ENCODE measurements at regions of chr19 and their contacts with region 1.

Region 1: DNA sequence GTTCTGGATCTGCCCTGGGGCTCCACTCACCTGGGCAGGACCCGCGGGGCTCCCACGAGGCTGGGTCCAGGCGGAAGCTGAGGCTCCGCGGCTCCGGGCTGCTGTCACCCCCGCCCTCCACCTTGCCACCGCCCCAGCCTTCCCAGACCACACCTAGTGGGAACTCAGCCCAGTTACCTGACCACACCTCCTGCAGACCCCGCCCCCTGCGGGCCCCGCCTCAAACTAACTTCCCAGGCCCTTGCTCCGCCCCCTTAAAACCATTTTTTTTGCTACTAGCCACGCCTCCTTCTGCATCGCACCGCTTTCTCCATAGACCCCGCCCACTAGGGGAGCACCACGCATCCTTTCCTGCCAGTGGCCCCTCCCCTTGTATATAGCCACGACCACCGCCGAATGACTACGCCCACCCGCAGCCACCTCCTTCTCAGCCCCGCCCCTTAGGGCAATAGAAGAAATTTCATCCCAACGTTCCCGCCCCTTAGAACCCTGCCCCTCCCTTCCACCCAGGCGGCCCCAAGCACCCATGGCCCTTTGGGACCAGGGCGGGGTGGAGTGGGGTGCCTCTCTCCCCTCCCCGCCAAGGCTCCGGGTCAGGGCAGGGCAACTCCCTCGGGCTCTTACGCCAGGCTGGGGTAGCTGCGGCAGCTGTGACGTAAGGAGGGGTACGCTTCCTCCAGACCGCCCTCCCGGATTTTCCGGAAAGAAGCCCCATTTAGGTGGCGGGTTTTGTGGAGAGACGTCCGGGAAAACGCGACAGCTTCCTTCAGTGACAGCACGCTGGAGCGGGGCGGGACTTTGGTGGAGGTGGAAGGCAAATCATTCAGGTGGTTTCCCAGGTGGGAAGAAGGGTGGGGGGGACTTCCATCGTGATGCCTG is at the start of gene SH2D3A:
- DNase-seq: peak; percentile 90 to 99 (median 95)
- ATAC-seq: peak; percentile 71
- H3K4me3 ChIP-seq: peak within 1 kb of the TSS; percentile 92
- H3K4me3 Mint-ChIP-seq: peak within 1 kb of the TSS; percentile 92
- H3K27ac ChIP-seq: peak within 1 kb of the TSS; percentile 93
- H3K27ac Mint-ChIP-seq: peak within 1 kb of the TSS; percentile 96
- H3K4me1 ChIP-seq: peaks cover 65% of the 10 kb centered on the region
- H3K4me1 Mint-ChIP-seq: peaks cover 47% of the 10 kb centered on the region
- H3K27me3 ChIP-seq: no peaks in the 10 kb centered on the region
- H3K27me3 Mint-ChIP-seq: no peaks in the 10 kb centered on the region
- CTCF ChIP-seq: no peak
- total RNA-seq, gene SH2D3A: 39.2 to 41.3 TPM

Region 2: DNA sequence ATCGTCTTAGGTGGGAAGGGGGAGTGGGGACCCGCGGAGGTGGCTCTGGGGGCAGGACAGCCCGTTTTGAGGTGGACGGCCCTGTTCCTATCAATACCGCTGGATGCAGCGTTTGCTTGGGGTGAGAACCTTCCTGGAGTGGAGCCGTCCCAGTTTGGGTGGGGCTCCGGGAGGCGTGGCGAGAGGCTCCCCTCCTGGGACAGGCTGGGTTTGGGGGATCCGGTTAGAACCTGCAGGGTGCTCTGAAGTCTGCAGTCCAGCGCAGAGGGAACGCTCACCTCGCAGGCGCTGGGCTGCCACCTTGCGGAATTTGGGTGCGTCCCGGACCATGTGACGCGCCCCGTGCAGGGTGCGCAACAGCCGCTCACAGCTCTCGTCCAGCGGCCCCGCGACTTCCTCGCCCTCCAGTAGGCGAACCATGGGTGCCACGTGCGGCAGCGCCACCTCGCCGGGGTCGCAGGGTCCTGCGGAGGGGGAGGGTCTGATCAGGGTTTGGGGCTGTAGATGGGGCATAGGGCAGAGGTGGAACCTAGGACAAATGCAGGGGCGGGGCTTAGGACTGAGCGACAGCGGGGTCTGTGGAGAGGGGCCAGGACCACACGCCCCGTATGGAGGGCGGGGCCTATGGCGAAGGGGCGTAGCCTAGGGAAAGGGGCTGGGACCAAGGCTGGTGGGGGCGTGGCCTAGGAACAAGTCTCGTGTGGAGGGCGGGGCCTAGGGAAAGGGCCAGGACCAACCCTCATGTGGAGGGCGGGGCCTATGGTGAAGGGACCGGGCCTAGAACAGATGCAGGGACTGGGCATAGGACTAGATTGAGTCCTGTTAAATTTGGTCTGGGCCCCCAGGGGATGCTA is 14.2 kb before region 1 on chr19:
- CTCF ChIA-PET with region 1: no interaction called
- POLR2A ChIA-PET with region 1: interaction called, 3 read pairs
- intact Hi-C with region 1: loop called in 1 of 2 experiments (anchors 2 kb)
- DNase-seq: peak; percentile 58 to 89 (median 73)
- ATAC-seq: peak; percentile 92
- H3K4me3 ChIP-seq: peak overlapping the region; percentile 47
- H3K4me3 Mint-ChIP-seq: peak overlapping the region; percentile 79
- H3K27ac ChIP-seq: peak overlapping the region; percentile 2 to 15
- H3K27ac Mint-ChIP-seq: peak overlapping the region; percentile 80
- H3K4me1 ChIP-seq: peaks cover 14% of the 10 kb centered on the region
- H3K4me1 Mint-ChIP-seq: peaks cover 11% of the 10 kb centered on the region
- H3K27me3 ChIP-seq: no peaks in the 10 kb centered on the region
- H3K27me3 Mint-ChIP-seq: no peaks in the 10 kb centered on the region
- CTCF ChIP-seq: peak; percentile 59

Region 3: DNA sequence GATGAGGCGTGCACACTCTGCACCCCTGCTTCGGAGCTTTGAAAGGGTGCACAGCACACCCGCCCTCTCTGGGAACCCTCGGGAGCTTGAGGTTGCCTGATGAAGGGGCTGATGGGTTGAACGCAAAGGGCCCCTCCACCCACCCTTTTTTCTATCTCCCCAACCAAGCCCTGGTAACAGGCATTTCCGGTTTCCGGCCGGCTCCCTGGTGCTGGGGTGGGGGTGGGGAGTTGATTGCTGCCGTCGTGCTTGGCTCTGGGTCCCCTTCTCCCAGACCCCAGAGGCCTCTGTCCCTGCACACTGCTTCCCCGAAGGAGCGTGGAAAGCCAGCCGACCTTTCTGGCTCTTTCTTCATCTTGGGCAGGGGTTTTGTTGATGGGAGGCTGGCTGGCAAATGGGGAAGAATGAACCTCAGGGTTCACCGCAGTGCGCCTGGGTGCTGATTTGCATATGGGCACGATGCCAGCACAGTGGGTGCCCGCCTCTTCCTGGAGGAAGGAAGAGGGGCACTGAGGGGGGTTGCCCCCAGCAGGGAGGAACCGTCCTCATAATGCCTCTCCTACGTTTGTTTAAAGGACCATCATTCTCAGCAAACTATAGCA is 34.0 kb after region 1 on chr19:
- CTCF ChIA-PET with region 1: interaction called, 9 read pairs
- POLR2A ChIA-PET with region 1: interaction called, 66 read pairs
- intact Hi-C with region 1: loop called (anchors 1 kb)
- DNase-seq: peak; percentile 55 to 92 (median 78)
- ATAC-seq: peak; percentile 84
- H3K4me3 ChIP-seq: peak overlapping the region; percentile 49
- H3K4me3 Mint-ChIP-seq: peak overlapping the region; percentile 91
- H3K27ac ChIP-seq: peak overlapping the region; percentile 43 to 92
- H3K27ac Mint-ChIP-seq: peak overlapping the region; percentile 93
- H3K4me1 ChIP-seq: peaks cover 76% of the 10 kb centered on the region
- H3K4me1 Mint-ChIP-seq: peaks cover 69% of the 10 kb centered on the region
- H3K27me3 ChIP-seq: no peaks in the 10 kb centered on the region
- H3K27me3 Mint-ChIP-seq: no peaks in the 10 kb centered on the region
- CTCF ChIP-seq: no peak

Region 4: DNA sequence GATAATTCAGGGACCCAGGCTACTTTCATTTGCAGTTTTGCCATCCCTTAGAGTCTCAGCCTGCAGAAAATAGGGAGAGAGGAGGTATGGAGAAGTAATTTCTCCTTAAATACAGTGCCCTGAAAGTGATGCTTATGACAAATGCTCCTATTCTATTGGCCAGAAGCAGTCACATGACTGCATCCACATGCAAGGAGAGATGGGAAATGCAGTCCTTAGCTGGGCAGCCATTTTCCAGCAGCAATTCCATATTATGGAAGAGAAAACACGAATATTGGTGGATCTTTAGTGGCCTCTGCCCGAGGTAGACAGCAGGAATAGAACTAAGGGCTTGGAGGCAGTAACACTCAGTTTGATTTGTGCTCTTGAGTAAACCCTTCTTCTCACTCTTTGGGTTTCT is 44.3 kb after region 1 on chr19:
- CTCF ChIA-PET with region 1: interaction called, 7 read pairs
- POLR2A ChIA-PET with region 1: interaction called, 20 read pairs
- intact Hi-C with region 1: no loop called
- DNase-seq: peak in 3 of 14 experiments; percentile 29 to 64 (median 54)
- ATAC-seq: no peak
- H3K4me3 ChIP-seq: no peak overlapping the region
- H3K4me3 Mint-ChIP-seq: peak overlapping the region; percentile 26
- H3K27ac ChIP-seq: peak overlapping the region in 1 of 2 donors; percentile 29
- H3K27ac Mint-ChIP-seq: peak overlapping the region; percentile 86
- H3K4me1 ChIP-seq: peaks cover 58% of the 10 kb centered on the region
- H3K4me1 Mint-ChIP-seq: peaks cover 79% of the 10 kb centered on the region
- H3K27me3 ChIP-seq: no peaks in the 10 kb centered on the region
- H3K27me3 Mint-ChIP-seq: no peaks in the 10 kb centered on the region
- CTCF ChIP-seq: no peak

Region 5: DNA sequence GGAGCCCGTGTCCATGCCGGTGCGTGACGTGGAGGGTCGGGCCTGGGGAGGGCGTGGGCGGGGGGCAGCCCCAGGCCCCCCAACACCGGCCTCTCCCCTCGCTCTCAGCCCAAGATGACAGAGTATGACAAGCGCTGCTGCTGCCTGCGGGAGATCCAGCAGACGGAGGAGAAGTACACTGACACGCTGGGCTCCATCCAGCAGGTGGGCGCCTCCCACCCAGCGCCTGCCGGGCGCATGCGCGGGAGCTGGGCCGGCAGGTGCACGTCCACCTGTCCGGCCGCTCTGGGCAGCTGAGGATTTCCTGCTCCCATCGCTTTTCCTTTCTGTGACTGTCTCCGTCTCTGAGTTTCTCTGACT is 54.7 kb after region 1 on chr19:
- CTCF ChIA-PET with region 1: no interaction called
- POLR2A ChIA-PET with region 1: no interaction called
- intact Hi-C with region 1: no loop called
- DNase-seq: no peak
- ATAC-seq: no peak
- H3K4me3 ChIP-seq: no peak overlapping the region
- H3K4me3 Mint-ChIP-seq: no peak overlapping the region
- H3K27ac ChIP-seq: no peak overlapping the region
- H3K27ac Mint-ChIP-seq: no peak overlapping the region
- H3K4me1 ChIP-seq: peaks cover 3% of the 10 kb centered on the region
- H3K4me1 Mint-ChIP-seq: peaks cover 16% of the 10 kb centered on the region
- H3K27me3 ChIP-seq: no peaks in the 10 kb centered on the region
- H3K27me3 Mint-ChIP-seq: no peaks in the 10 kb centered on the region
- CTCF ChIP-seq: no peak